ENCODE measurements at regions of chr18 and their contacts with region 1.

Region 1: DNA sequence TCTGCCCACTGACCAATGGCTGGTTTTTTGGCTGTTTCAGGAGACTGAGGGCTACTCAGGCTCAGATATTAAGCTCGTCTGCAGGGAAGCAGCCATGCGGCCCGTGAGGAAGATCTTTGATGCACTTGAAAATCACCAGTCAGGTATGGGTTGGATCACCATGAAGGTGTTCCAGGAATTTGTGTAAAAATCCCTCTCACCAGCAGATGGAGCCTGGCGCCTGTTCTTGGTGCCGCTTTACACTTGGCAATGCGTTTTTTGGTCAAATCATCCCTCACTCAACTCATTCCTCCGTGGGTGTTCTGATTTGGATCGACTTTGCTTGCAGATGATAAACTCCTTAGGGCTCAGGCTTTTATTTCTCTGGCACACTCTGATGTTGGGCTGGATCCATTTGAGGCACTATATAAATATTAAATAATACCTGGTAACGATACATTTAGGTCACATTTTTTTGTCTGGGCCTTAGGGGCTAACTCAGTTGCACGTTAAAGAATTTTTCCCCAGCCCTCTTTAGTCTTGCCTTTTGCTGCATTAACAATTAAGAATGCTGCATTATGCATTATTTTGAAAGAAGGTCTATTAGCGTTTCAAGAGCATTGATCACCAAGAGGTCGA is 50.0 kb downstream of the HDHD2 start:
- DNase-seq: no peak
- H3K4me3 ChIP-seq: no peak overlapping the region
- H3K27ac ChIP-seq: no peak overlapping the region
- H3K4me1 ChIP-seq: no peaks in the 10 kb centered on the region
- H3K27me3 ChIP-seq: no peaks in the 10 kb centered on the region
- CTCF ChIP-seq: peak in 5 of 6 experiments; percentile 49 to 76 (median 63)
- POLR2A ChIP-seq: no peak

Region 2: DNA sequence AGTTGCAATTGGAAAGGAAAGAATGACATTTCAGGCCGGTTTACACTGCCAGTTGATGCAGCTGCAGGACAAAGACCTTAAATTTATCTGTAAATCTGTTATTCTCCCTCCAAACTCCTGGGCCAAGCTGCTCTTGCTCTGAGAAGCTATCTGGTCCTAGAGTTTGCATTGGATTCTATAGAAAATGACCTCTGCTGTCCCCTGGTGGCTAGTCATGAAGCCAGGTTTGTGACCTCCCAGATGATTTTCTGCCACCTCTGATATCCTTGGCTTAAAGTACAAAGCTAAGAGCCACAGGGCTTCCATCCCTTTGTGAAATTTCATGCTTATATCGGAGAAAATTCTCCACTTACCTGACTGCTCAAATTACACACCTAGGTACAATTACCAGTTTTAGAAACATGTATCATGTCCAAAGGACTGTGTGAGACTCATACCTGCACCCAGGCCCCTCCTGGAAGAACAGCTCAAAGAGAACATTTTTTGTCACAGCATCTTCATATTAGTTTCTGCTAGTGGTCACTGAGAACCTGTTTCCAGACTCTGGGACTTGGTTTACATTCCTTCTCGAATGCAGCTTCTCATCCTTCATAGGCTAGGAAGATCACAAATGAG is 104.7 kb after region 1 on chr18:
- intact Hi-C with region 1: loop called (anchors 10 kb)
- DNase-seq: no peak
- H3K4me3 ChIP-seq: no peak overlapping the region
- H3K27ac ChIP-seq: no peak overlapping the region
- H3K4me1 ChIP-seq: no peaks in the 10 kb centered on the region
- H3K27me3 ChIP-seq: peaks cover 0 to 78% (median 0%) of the 10 kb centered on the region in 4 donors
- CTCF ChIP-seq: peak; percentile 33 to 80 (median 67)
- POLR2A ChIP-seq: no peak

Region 3: GRCh38 chr18:47748847-47749599 is 648.7 kb after region 1 on chr18:
- intact Hi-C with region 1: loop called (anchors 10 kb)
- DNase-seq: peak; percentile 9
- H3K4me3 ChIP-seq: peak overlapping the region in 3 of 4 donors; percentile 25 to 55 (median 35)
- H3K27ac ChIP-seq: no peak overlapping the region
- H3K4me1 ChIP-seq: peaks cover 0 to 10% (median 0%) of the 10 kb centered on the region in 3 donors
- H3K27me3 ChIP-seq: peaks cover 0 to 37% (median 0%) of the 10 kb centered on the region in 4 donors
- CTCF ChIP-seq: peak; percentile 95 to 100 (median 100)
- POLR2A ChIP-seq: no peak